GM12878 (cell line): ENCODE measurements at regions of chr21 and their contacts with region 1.

Region 1: DNA sequence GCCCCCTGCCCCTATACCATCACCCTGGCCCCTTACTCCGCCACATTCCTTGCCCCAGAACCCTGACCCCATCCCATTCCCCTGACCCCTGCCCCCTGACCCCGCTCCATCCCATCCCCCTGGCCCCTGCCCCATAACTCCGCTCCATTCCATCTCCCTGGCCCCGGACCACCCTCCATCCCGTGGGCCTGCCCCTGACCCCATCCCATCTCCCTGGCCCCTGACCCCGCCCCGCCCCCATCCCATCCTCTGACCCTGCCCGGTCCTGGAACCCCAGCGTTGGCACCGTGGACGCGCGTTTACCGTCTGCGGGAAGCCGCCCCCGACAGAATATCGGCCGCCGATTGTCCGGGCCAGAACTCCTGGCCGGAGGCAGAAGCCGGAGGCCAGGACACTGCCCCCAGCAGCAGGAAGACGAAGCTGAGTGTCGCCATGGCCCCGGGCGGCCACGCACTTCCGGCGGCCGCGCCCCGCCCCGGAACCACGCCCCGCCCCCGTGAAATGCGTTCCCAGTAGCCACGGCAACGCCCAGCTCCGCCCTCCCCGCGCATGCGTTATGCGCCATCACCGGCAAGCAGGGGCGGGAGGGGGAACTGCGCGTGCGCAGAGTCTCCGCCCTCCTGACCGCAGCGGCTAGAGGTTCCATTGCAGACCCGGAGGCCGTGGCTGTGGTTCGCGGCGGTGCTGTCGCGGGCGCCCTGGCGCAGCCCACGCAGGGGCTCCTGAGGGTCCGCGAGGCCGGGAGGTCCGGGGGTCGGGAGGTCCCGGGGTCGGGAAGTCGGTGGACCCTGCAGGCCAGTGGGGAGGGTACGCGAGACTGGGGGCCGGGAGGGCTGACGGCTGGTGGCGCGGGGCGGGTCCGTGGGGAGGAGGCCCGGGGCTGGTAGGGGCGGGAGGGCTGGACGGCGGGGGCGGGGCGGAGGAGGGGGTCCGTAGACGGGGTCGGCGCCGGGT is at the start of gene POFUT2:
- DNase-seq: peak; percentile 82
- ATAC-seq: peak; percentile 91
- H3K4me3 ChIP-seq: peak within 1 kb of the TSS; percentile 98
- H3K27ac ChIP-seq: no peak within 1 kb of the TSS
- H3K4me1 ChIP-seq: 0 out of 2 replicates have a peak, but pooled peaks cover 4% of the 10 kb centered on the region
- H3K27me3 ChIP-seq: no peaks in the 10 kb centered on the region
- CTCF ChIP-seq: no peak
- EP300 ChIP-seq: no peak
- POLR2A ChIP-seq: peak; percentile 90
- RAD21 ChIP-seq: no peak
- polyA plus RNA-seq, gene POFUT2: 1.2 to 1.6 TPM

Region 2: GRCh38 chr21:45152265-45152746 is 135.4 kb before region 1 on chr21:
- CTCF ChIA-PET with region 1: interaction called, 18 read pairs
- POLR2A ChIA-PET with region 1: interaction called, 4 read pairs
- RAD21 ChIA-PET with region 1: interaction called, 5 read pairs
- SMC1A ChIA-PET with region 1: interaction called, 8 read pairs
- in situ Hi-C with region 1: no loop called
- intact Hi-C with region 1: loop called (anchors 5 kb)
- DNase-seq: no peak
- ATAC-seq: peak; percentile 97
- H3K4me3 ChIP-seq: no peak overlapping the region
- H3K27ac ChIP-seq: no peak overlapping the region
- H3K4me1 ChIP-seq: 0 out of 2 replicates have a peak, but pooled peaks cover 4% of the 10 kb centered on the region
- H3K27me3 ChIP-seq: 0 out of 4 replicates have a peak, but pooled peaks cover 0 to 2% of the 10 kb centered on the region in 2 experiments
- CTCF ChIP-seq: peak; percentile 68 to 95 (median 88); a peak in 5 of 6 replicates
- EP300 ChIP-seq: peak in 1 of 2 experiments; percentile 43; a peak in 2 of 4 replicates
- POLR2A ChIP-seq: peak; percentile 28; the same call in 1 of the 2 replicates
- RAD21 ChIP-seq: peak; percentile 59

Region 3: DNA sequence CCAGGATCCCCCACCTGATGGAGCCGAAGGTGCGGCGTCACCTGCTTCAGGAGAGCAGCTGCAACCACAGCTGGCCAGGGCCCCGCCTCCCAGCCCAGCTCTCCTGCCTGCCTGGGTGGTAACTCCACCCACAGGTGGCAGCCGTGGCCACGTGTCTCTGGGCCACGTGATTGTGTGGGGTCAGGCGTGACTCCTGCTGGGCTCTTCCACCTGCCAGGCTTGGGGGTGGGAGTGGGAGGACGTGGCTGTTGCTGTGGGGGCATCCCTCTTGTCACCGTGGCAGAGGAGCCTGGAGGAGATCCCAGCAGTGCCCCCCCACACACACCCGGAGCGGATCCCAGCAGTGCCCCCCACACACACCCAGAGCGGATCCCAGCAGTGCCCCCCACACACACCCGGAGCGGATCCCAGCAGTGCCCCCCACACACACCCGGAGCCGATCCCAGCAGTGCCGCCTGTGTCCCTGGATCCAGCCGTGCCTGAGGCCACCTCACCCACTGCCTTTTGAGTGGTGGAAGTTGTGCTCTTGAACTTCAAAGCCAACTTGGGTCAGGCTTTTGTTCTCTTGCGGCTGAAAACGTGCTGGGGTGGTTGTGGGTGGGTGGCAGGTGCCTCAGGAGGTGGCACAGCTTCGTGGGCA is 32.2 kb before region 1 on chr21:
- CTCF ChIA-PET with region 1: no interaction called
- POLR2A ChIA-PET with region 1: no interaction called
- RAD21 ChIA-PET with region 1: no interaction called
- SMC1A ChIA-PET with region 1: no interaction called
- in situ Hi-C with region 1: no loop called
- intact Hi-C with region 1: no loop called
- DNase-seq: no peak
- ATAC-seq: peak; percentile 85
- H3K4me3 ChIP-seq: no peak overlapping the region
- H3K27ac ChIP-seq: no peak overlapping the region
- H3K4me1 ChIP-seq: no peaks in the 10 kb centered on the region
- H3K27me3 ChIP-seq: no peaks in the 10 kb centered on the region
- CTCF ChIP-seq: no peak
- EP300 ChIP-seq: no peak
- POLR2A ChIP-seq: no peak
- RAD21 ChIP-seq: no peak

Region 4: GRCh38 chr21:45439161-45439872 is 151.6 kb after region 1 on chr21:
- CTCF ChIA-PET with region 1: interaction called, 4 read pairs
- POLR2A ChIA-PET with region 1: no interaction called
- RAD21 ChIA-PET with region 1: interaction called, 3 read pairs
- SMC1A ChIA-PET with region 1: interaction called, 5 read pairs
- in situ Hi-C with region 1: no loop called
- intact Hi-C with region 1: loop called (anchors 1 kb)
- DNase-seq: no peak
- ATAC-seq: peak; percentile 98
- H3K4me3 ChIP-seq: no peak overlapping the region
- H3K27ac ChIP-seq: no peak overlapping the region
- H3K4me1 ChIP-seq: no peaks in the 10 kb centered on the region
- H3K27me3 ChIP-seq: no peaks in the 10 kb centered on the region
- CTCF ChIP-seq: peak; percentile 88 to 95 (median 93); a peak in 5 of 6 replicates
- EP300 ChIP-seq: no peak
- POLR2A ChIP-seq: no peak
- RAD21 ChIP-seq: peak; percentile 94

Region 5: DNA sequence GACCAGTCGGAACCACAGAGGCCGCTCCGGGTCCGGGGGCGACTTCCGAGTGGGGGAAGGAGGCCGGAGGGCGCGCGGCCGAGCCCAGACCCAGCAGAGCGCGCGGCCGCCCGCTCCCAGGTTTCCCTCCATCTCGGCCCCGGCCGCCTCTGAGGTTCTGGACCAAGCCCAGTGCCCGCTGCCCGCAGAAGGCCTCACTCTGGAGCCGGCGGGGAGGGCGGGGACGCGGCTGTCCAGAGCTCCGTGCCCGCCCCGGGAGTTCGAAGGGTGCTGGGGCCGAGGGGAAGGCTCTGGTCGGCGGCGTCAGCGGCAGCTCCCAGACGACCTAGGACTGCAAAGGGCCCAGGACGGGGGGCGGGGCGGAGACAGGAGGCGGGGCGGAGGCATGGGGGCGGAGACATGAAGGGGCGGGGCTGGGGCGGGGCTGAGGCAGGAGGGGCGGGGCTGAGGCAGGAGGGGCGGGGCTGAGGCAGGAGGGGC is 302.6 kb after region 1 on chr21:
- CTCF ChIA-PET with region 1: no interaction called
- POLR2A ChIA-PET with region 1: no interaction called
- RAD21 ChIA-PET with region 1: no interaction called
- SMC1A ChIA-PET with region 1: no interaction called
- in situ Hi-C with region 1: no loop called
- intact Hi-C with region 1: loop called (anchors 5 kb)
- DNase-seq: no peak
- ATAC-seq: peak; percentile 51
- H3K4me3 ChIP-seq: no peak overlapping the region
- H3K27ac ChIP-seq: no peak overlapping the region
- H3K4me1 ChIP-seq: peaks cover 20% of the 10 kb centered on the region
- H3K27me3 ChIP-seq: no peaks in the 10 kb centered on the region
- CTCF ChIP-seq: no peak
- EP300 ChIP-seq: no peak
- POLR2A ChIP-seq: no peak
- RAD21 ChIP-seq: no peak

Region 6: DNA sequence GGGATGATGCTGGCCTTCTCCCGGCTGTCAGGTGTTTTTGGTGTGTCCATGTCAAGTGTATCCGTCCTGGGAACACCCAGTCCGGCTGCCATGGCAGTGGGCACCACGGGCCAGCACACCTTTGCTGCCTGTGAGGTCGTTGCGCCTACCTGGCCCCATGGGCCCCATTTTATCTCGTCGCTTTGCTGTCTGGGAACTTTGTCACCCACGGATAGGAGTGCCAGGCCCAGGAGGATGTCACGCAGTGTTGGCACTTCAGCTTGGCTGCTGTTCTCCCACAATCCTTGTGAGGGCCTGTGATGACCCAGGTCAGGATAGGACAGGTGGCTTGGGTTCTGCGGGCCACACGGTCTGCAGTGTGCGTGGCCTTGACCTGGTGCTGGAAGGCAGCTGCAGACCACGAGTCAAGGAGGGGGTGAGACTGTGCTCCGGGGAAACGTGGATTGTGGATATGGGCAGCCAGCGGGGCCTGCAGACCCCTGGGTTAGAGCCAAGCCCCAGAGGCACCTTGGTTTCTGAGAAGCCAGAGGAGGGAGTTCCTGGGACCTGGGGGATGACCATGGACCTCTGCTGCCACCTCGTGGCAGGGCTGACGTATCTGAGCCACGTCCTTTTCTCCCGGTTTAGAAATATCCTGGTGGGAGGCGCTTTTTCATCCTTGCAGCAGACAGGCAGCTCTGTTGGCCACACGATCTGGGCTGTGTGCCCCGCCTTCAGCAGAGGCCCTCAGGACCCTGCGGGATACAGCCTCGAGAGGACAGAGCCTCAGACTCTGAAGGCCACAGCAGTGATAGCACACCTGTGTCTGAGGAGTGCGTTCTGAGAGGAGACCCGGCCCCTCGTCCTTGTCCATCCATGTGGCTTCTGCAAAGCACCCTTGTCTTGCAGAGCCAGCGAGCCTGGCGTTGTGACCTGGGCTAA is 532.7 kb after region 1 on chr21:
- CTCF ChIA-PET with region 1: interaction called, 7 read pairs
- POLR2A ChIA-PET with region 1: no interaction called
- RAD21 ChIA-PET with region 1: interaction called, 3 read pairs
- SMC1A ChIA-PET with region 1: no interaction called
- in situ Hi-C with region 1: loop called (anchors 10 kb)
- intact Hi-C with region 1: loop called (anchors 5 kb)
- DNase-seq: no peak
- ATAC-seq: peak; percentile 88
- H3K4me3 ChIP-seq: no peak overlapping the region
- H3K27ac ChIP-seq: no peak overlapping the region
- H3K4me1 ChIP-seq: peaks cover 4% of the 10 kb centered on the region
- H3K27me3 ChIP-seq: no peaks in the 10 kb centered on the region
- CTCF ChIP-seq: peak; percentile 83 to 94 (median 90); a peak in 5 of 6 replicates
- EP300 ChIP-seq: no peak
- POLR2A ChIP-seq: no peak
- RAD21 ChIP-seq: peak; percentile 94